ENCODE measurements at regions of chr4 and their contacts with region 1.

Region 1: GRCh38 chr4:53929955-53930798 is 134.2 kb downstream of the CHIC2 start:
- DNase-seq: peak; percentile 35 to 77 (median 52)
- ATAC-seq: peak; percentile 97
- H3K4me3 ChIP-seq: no peak overlapping the region
- H3K27ac ChIP-seq: no peak overlapping the region
- H3K4me1 ChIP-seq: no peaks in the 10 kb centered on the region; a peak in 1 of 5 replicates
- H3K27me3 ChIP-seq: peaks cover 2 to 21% of the 10 kb centered on the region in 2 experiments; a peak in 3 of 5 replicates
- CTCF ChIP-seq: peak; percentile 75 to 84 (median 81)
- EP300 ChIP-seq: no peak
- POLR2A ChIP-seq: no peak
- RAD21 ChIP-seq: peak; percentile 73 to 80

Region 2: DNA sequence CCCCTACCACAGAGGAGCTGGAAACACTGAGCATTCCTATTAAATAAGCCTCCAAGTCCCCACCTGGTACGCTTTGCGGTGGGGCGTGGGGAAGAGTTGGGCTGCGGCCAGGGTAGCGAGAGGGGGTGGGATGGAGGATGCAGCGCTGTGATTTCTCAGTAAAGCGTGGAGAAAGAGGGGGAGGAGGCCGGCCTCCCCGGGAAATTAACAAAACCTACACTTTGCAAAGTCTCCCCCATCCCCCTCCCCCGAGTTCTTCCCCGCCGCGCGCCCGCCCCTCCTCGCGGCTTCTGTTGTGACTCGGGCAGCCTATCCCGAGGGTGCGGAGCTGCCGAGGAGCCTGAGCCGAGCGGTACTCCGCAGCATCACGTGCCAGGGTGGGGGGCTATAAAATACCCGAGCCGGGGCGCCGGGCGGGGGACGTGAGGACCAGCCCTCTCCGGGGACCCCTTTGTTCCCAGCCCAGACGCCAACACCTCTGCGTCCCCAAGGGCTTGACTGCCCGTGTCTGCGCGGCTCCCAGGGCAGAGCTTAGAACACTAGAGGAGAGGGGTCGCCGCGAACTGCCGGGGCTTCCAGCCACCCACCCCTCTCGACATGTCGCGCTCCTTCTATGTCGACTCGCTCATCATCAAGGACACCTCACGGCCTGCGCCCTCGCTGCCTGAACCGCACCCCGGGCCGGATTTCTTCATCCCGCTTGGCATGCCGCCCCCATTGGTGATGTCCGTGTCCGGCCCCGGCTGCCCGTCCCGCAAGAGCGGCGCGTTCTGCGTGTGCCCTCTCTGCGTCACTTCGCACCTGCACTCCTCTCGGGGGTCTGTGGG is 169.8 kb after region 1 on chr4 and contains the start of gene GSX2:
- CTCF ChIA-PET with region 1: no interaction called
- POLR2A ChIA-PET with region 1: no interaction called
- in situ Hi-C with region 1: no loop called
- intact Hi-C with region 1: loop called (anchors 5 kb)
- DNase-seq: no peak
- ATAC-seq: no peak
- H3K4me3 ChIP-seq: no peak within 1 kb of the TSS
- H3K27ac ChIP-seq: no peak within 1 kb of the TSS
- H3K4me1 ChIP-seq: peaks cover 0 to 7% of the 10 kb centered on the region in 2 experiments; a peak in 2 of 5 replicates
- H3K27me3 ChIP-seq: peaks cover 64 to 75% of the 10 kb centered on the region in 2 experiments
- CTCF ChIP-seq: no peak
- EP300 ChIP-seq: no peak
- POLR2A ChIP-seq: no peak
- RAD21 ChIP-seq: no peak
- polyA plus RNA-seq, gene GSX2: not detected

Region 3: GRCh38 chr4:54217642-54218495 is 287.7 kb after region 1 on chr4:
- CTCF ChIA-PET with region 1: interaction called, 6 read pairs
- POLR2A ChIA-PET with region 1: no interaction called
- in situ Hi-C with region 1: no loop called
- intact Hi-C with region 1: loop called (anchors 1 kb)
- DNase-seq: peak; percentile 73 to 80 (median 78)
- ATAC-seq: peak; percentile 98
- H3K4me3 ChIP-seq: no peak overlapping the region
- H3K27ac ChIP-seq: no peak overlapping the region
- H3K4me1 ChIP-seq: no peaks in the 10 kb centered on the region; a peak in 1 of 5 replicates
- H3K27me3 ChIP-seq: peaks cover 3 to 4% of the 10 kb centered on the region in 2 experiments; a peak in 3 of 5 replicates
- CTCF ChIP-seq: peak; percentile 79 to 89 (median 86)
- EP300 ChIP-seq: no peak
- POLR2A ChIP-seq: no peak
- RAD21 ChIP-seq: peak; percentile 84 to 87